CD8-positive, alpha-beta memory T cell (primary cell): ENCODE measurements at regions of chr12 and their contacts with region 1.

Region 1: GRCh38 chr12:111434680-111435338 is 29.1 kb downstream of the SH2B3 start:
- DNase-seq: peak; percentile 80 to 95 (median 89)
- H3K4me3 ChIP-seq: peak overlapping the region; percentile 49
- H3K4me3 Mint-ChIP-seq: peak overlapping the region; percentile 74 to 92 (median 87)
- H3K27ac ChIP-seq: peak overlapping the region; percentile 98
- H3K27ac Mint-ChIP-seq: peak overlapping the region; percentile 99 to 100 (median 100)
- H3K4me1 ChIP-seq: peaks cover 97% of the 10 kb centered on the region
- H3K4me1 Mint-ChIP-seq: peaks cover 85 to 98% (median 89%) of the 10 kb centered on the region in 3 donors
- H3K27me3 ChIP-seq: no peaks in the 10 kb centered on the region
- H3K27me3 Mint-ChIP-seq: peaks cover 0 to 3% of the 10 kb centered on the region in 2 donors

Region 2: GRCh38 chr12:111444925-111445725 is 10.3 kb after region 1 on chr12:
- CTCF ChIA-PET with region 1: interaction called, 218 read pairs
- POLR2A ChIA-PET with region 1: interaction called, 41 read pairs
- DNase-seq: peak; percentile 68 to 91 (median 73)
- H3K4me3 ChIP-seq: peak overlapping the region; percentile 26
- H3K4me3 Mint-ChIP-seq: peak overlapping the region; percentile 22 to 89 (median 75)
- H3K27ac ChIP-seq: peak overlapping the region; percentile 40
- H3K27ac Mint-ChIP-seq: peak overlapping the region; percentile 88 to 98 (median 94)
- H3K4me1 ChIP-seq: peaks cover 58% of the 10 kb centered on the region
- H3K4me1 Mint-ChIP-seq: peaks cover 69 to 83% (median 71%) of the 10 kb centered on the region in 3 donors
- H3K27me3 ChIP-seq: no peaks in the 10 kb centered on the region
- H3K27me3 Mint-ChIP-seq: peaks cover 0 to 3% of the 10 kb centered on the region in 2 donors

Region 3: GRCh38 chr12:111519083-111519482 is 84.3 kb after region 1 on chr12:
- CTCF ChIA-PET with region 1: no interaction called
- POLR2A ChIA-PET with region 1: no interaction called
- DNase-seq: no peak
- H3K4me3 ChIP-seq: no peak overlapping the region
- H3K4me3 Mint-ChIP-seq: no peak overlapping the region
- H3K27ac ChIP-seq: no peak overlapping the region
- H3K27ac Mint-ChIP-seq: no peak overlapping the region
- H3K4me1 ChIP-seq: no peaks in the 10 kb centered on the region
- H3K4me1 Mint-ChIP-seq: no peaks in the 10 kb centered on the region
- H3K27me3 ChIP-seq: no peaks in the 10 kb centered on the region
- H3K27me3 Mint-ChIP-seq: no peaks in the 10 kb centered on the region